ENCODE measurements at regions of chr22 and their contacts with region 1.

Region 1: GRCh38 chr22:48618326-48618725 is 1209.3 kb downstream of the BRD1 start:
- DNase-seq: no peak
- H3K4me3 ChIP-seq: no peak overlapping the region
- H3K27ac ChIP-seq: no peak overlapping the region
- H3K4me1 ChIP-seq: no peaks in the 10 kb centered on the region
- H3K27me3 ChIP-seq: no peaks in the 10 kb centered on the region
- CTCF ChIP-seq: no peak
- EP300 ChIP-seq: no peak
- POLR2A ChIP-seq: no peak

Region 2: DNA sequence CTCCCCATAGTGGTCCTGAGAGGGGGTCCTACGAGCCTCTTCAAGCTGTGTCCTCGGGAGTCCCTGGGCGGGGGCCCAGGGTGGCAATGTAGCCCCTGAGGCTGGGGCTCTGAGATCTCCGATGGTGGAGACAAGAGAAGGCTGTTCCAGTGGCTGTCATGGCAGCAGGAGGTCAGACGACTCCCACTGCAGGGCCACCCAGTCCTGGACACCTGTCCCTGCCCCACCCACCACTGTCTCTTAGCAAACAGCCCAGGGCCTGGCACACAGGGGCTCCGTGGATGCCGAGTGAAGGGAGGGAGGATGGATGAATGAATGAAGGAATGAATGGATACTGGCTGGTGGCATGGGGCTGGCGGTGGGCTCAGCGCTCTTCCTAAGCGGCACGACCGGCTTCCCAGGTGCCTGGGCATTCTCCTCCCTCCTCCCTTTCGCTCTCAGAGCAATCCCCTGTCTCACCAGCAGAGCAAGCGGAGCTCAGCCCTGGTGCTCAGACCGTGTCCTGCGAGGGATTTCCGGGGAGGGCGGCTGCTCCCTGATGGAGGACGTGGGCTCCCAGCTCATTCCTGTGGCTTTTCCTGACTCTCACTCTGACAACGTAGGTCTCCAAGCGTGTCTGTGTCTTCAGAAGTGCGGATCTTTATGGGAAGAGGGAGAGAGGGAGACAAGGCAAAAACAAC is 63.3 kb before region 1 on chr22:
- intact Hi-C with region 1: loop called in 1 of 4 experiments (anchors 10 kb)
- DNase-seq: no peak
- H3K4me3 ChIP-seq: no peak overlapping the region
- H3K27ac ChIP-seq: no peak overlapping the region
- H3K4me1 ChIP-seq: no peaks in the 10 kb centered on the region
- H3K27me3 ChIP-seq: no peaks in the 10 kb centered on the region
- CTCF ChIP-seq: no peak
- EP300 ChIP-seq: no peak
- POLR2A ChIP-seq: no peak